ENCODE measurements at regions of chr6 and their contacts with region 1.

Region 1: DNA sequence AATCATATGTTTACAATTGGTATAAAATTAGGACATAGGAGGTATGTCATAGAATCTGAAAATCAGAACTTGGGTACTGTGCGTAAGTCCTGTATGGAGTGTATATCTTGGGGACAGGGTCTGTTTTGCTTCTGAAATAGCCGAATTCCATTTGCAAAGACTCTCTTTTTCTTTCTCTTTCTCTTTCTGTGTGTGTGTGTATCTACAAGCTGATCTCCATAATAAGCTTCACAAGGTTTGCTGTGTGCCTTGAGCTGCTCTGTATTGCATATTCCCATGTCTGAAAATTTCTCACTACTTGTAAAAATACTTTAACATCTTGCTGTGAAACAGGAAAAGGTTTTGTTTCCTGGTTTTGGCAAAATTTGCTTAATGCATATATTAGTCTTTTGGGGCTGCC is 29.5 kb downstream of the STX11 start:
- DNase-seq: no peak
- H3K4me3 Mint-ChIP-seq: no peak overlapping the region
- H3K27ac Mint-ChIP-seq: no peak overlapping the region
- H3K4me1 Mint-ChIP-seq: peaks cover 47% of the 10 kb centered on the region
- H3K27me3 Mint-ChIP-seq: no peaks in the 10 kb centered on the region

Region 2: GRCh38 chr6:144036064-144036834 is 143.6 kb before region 1 on chr6:
- intact Hi-C with region 1: no loop called
- DNase-seq: peak; percentile 8
- H3K4me3 Mint-ChIP-seq: peak overlapping the region; percentile 17
- H3K27ac Mint-ChIP-seq: peak overlapping the region; percentile 1
- H3K4me1 Mint-ChIP-seq: peaks cover 17% of the 10 kb centered on the region
- H3K27me3 Mint-ChIP-seq: peaks cover under 1% of the 10 kb centered on the region

Region 3: DNA sequence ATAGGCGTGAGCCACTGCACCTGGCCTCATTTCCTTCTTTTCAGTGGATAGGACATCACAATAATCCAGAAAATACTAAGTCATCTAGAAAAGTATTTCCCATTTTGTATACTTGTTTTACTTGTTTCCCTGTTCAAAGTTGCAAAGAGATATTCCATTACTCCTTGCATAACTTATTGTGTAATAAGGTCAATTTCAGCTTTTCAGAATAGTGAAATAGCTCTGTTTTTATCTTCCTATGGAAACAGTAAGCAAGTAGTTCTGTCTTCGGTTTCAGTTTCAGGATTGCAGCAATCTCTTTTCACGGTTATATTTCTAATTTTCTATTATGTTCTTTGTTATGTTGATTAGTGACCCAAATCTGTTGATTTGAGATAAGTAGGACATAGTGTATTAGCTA is 23.5 kb before region 1 on chr6:
- intact Hi-C with region 1: loop called (anchors 1 kb)
- DNase-seq: no peak
- H3K4me3 Mint-ChIP-seq: peak overlapping the region; percentile 43
- H3K27ac Mint-ChIP-seq: peak overlapping the region; percentile 60
- H3K4me1 Mint-ChIP-seq: peaks cover 80% of the 10 kb centered on the region
- H3K27me3 Mint-ChIP-seq: no peaks in the 10 kb centered on the region

Region 4: GRCh38 chr6:144897441-144897921 is 717.7 kb after region 1 on chr6:
- intact Hi-C with region 1: no loop called
- DNase-seq: no peak
- H3K4me3 Mint-ChIP-seq: no peak overlapping the region
- H3K27ac Mint-ChIP-seq: no peak overlapping the region
- H3K4me1 Mint-ChIP-seq: no peaks in the 10 kb centered on the region
- H3K27me3 Mint-ChIP-seq: peaks cover 8% of the 10 kb centered on the region

Measured in activated T-helper 1 cell treated with anti-CD3 and anti-CD28 coated beads, Interleukin-12 subunit alpha, Interleukin-12 subunit beta, Interleukin-2, Interleukin-4 antibody, amounts not matched to agents 30 ng/mL and 10 ng/mL and 1 ng/mL, durations not matched to agents 14 hours and 24 hours and 36 hours (primary cell).